Upper lobe of right lung (tissue), 1 donor: ENCODE measurements at regions of chr2 and their contacts with region 1.

Region 1: GRCh38 chr2:222707689-222708525 is 36.4 kb downstream of the MOGAT1 start:
- DNase-seq: peak; percentile 90
- ATAC-seq: peak; percentile 83
- H3K4me3 ChIP-seq: no peak overlapping the region
- H3K27ac ChIP-seq: no peak overlapping the region
- H3K4me1 ChIP-seq: peaks cover 9% of the 10 kb centered on the region
- H3K27me3 ChIP-seq: no peaks in the 10 kb centered on the region
- CTCF ChIP-seq: peak; percentile 92

Region 2: DNA sequence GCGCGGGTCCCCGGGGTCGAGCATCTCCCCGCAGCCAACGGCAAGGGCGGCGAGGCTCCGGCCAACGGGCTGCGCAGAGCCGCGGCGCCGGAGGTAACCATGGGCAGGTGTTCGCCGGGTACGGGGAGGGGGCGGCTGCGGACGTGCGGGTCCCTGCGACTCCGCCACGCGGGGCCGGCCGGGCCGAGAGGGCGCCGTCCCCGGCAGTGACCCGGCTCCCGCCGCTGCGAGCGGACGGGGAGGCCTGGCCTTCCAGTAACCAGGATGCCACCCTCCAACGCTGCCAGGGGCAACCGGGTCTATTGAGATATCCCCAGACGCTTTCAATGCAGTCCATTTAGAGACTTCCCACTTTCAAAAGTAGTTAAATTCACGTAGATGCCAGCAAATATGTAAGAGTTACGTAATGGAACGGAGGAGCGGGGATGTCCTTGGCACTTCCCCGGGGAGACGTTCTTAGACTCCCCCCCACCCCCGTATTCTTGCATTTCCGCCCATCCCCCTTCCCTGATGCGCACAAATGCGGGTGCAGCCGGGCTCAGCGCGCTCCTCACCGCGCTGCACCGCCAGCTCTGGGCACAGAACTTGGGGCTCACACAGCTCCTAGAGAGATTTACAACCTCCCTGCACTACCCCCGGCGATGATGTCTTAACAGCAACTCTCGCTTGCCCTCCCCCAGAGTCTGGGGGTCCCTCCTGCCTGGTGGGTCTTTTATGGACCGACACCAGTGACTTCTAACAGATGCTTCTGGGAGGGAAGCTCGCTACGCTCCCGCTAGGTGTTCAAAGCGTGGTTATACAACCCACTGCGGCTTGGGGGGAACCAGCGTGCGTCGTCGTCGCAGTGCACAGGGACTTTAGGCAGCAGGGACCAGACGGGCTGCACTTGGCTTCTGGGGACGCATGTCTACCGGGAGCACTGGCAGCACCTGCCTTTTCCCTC is 282.9 kb before region 1 on chr2:
- intact Hi-C with region 1: no loop called
- DNase-seq: peak; percentile 69
- ATAC-seq: peak; percentile 26
- H3K4me3 ChIP-seq: peak overlapping the region; percentile 57
- H3K27ac ChIP-seq: peak overlapping the region; percentile 65
- H3K4me1 ChIP-seq: no peaks in the 10 kb centered on the region
- H3K27me3 ChIP-seq: peaks cover 25% of the 10 kb centered on the region
- CTCF ChIP-seq: no peak

Region 3: DNA sequence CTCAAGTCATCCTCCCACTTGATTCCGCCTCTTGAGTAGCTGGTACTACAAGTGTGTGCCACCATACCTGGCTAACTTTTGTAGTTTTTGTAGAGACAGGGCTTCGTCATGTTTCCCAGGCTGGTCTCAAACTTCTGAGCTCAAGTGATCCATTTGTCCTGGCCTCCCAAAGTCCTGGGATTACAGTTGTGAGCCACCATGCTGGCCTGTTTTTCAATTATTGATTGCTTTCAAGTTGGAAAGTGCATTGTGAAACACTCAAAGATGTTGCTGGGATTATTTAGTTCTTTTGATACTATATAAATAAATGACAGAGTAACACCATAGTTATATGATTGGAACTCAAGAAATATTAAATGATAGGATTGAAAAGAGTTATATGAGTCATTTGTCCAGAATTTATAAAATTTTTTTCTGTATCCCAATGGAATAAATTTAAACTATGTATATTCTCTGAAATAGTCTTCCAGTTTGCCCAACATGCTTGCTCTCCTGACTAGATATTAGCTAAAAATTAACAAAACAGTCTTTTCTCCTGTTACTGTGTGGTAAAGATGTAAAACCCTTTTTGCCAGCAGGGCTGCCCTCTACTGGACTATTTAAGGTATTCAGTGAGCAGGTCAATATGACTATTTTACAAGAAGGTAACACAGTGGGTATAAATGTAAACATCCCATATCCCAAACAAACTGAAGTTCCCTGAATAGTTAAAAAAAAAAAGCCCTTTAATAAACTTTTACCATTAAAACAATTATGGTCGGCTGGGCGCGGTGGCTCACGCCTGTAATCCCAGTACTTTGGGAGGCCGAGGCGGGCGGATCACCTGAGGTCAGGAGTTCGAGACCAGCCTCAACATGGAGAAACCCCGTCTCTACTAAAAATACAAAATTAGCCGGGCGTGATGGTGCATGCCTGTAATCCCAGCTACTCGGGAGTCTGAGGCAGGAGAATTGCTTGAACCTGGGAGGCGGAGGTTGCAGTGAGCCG is 195.6 kb after region 1 on chr2:
- intact Hi-C with region 1: loop called (anchors 10 kb)
- DNase-seq: no peak
- ATAC-seq: peak; percentile 87
- H3K4me3 ChIP-seq: no peak overlapping the region
- H3K27ac ChIP-seq: no peak overlapping the region
- H3K4me1 ChIP-seq: peaks cover 33% of the 10 kb centered on the region
- H3K27me3 ChIP-seq: no peaks in the 10 kb centered on the region
- CTCF ChIP-seq: peak; percentile 70